AG04449 (cell line): ENCODE measurements at regions of chr2 and their contacts with region 1.

Region 1: GRCh38 chr2:42828487-42829425 is 36.4 kb upstream of the HAAO start:
- DNase-seq: no peak
- H3K4me3 ChIP-seq: no peak overlapping the region
- CTCF ChIP-seq: peak; percentile 88

Region 2: GRCh38 chr2:42848265-42848664 is 19.5 kb after region 1 on chr2:
- CTCF ChIA-PET with region 1: interaction called, 12 read pairs
- POLR2A ChIA-PET with region 1: no interaction called
- DNase-seq: no peak
- H3K4me3 ChIP-seq: no peak overlapping the region
- CTCF ChIP-seq: no peak

Region 3: GRCh38 chr2:42928692-42929545 is 100.2 kb after region 1 on chr2:
- CTCF ChIA-PET with region 1: interaction called, 35 read pairs
- POLR2A ChIA-PET with region 1: no interaction called
- DNase-seq: no peak
- H3K4me3 ChIP-seq: no peak overlapping the region
- CTCF ChIP-seq: peak; percentile 64

Region 4: DNA sequence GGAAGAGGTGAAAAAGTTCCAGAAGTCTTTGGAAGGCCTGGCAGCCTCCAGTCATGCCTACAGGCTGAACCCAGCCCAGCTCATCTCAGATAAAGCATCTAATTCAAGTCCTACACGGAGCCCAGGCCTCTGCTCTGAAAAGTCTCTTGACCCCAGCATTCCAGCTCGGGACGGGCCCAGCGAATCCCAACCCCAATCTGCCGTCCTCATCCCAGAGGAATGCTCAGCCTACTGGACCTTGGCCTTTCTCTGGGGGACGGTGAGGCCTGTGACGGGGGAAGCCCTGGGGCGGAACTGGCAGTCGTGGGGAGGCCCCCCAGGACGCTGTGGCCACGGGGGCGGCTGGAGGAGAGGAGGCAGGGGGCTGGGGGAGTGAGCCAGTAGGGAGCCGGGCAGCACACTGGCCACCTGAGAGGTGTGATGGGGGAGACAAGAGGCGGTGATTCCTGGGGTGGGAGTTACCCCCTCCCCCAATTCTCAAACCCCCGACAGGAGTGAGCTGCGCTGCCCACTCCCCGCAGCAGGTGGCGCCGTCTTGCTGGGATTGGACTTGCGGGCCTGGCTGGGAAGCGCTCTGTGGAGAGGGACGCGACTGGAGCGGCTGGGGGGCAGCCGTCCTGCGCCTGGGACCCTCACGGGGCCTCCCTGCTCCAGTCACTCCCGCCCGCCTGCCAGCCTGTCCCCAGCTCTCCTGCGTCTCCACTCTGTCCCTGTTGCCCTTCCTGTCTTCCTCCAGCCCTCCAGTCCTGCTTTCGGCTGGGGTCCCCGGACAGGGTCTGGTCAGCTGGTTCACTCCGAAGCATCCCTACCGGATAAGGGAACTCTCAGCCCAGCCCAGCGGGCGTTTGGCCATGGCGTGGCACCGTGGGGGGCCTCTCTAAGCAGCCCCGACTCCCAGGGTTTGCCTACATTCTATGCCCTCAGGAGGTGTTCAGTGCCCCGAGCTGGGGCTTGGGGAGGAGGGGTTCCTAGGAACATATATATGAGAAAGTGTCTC is 146.3 kb after region 1 on chr2:
- CTCF ChIA-PET with region 1: interaction called, 15 read pairs
- POLR2A ChIA-PET with region 1: no interaction called
- DNase-seq: no peak
- H3K4me3 ChIP-seq: peak overlapping the region; percentile 48
- CTCF ChIP-seq: peak; percentile 99

Region 5: DNA sequence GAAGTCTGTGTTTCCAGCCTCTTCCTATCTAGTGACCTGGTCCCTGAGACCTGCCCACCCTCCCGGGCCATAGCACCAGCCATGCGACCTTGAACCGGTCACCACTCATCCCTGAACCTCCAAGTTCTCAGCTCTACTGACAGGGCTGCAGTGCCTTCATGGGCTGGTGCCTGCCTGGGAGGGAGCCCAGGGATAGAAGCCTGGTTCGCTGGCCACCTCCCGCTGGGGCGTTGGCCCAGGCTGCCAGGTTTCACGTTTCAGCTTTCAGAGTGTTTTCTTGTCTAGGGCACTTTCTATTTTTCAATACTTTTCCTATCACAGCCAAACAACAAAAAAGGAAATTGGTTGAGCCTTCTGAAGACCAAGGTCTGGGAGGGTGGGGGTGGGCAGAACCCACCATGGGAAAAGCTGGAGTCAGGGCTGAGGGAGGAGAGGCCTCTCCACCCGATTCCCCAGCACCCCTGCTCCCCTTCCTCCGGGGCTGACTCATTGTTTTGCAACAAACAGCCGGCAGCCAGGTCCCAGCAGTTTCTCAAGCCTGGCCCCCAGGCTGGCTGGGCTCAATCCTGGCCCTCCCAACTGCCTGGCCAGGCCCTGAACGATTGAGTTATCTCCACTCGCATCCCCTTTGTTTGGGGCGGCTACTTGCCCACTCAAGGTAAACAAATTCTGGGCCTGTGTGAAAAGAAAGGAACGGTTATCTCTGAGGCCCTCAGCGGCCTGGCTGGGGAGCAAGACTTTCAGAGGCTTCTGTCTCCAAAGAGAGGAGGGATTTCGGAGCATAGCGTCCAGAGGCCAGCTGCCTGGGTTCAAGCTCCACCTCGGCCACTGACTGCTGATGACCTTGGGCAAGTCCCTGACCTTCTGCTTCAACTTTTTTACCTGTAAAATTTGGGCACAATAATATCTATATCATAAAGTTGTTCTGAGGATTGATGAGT is 350.1 kb after region 1 on chr2:
- CTCF ChIA-PET with region 1: no interaction called
- POLR2A ChIA-PET with region 1: no interaction called
- DNase-seq: no peak
- H3K4me3 ChIP-seq: no peak overlapping the region
- CTCF ChIP-seq: no peak

Region 6: GRCh38 chr2:43239981-43240761 is 411.4 kb after region 1 on chr2:
- CTCF ChIA-PET with region 1: interaction called, 10 read pairs
- POLR2A ChIA-PET with region 1: no interaction called
- DNase-seq: no peak
- H3K4me3 ChIP-seq: no peak overlapping the region
- CTCF ChIP-seq: no peak

Region 7: DNA sequence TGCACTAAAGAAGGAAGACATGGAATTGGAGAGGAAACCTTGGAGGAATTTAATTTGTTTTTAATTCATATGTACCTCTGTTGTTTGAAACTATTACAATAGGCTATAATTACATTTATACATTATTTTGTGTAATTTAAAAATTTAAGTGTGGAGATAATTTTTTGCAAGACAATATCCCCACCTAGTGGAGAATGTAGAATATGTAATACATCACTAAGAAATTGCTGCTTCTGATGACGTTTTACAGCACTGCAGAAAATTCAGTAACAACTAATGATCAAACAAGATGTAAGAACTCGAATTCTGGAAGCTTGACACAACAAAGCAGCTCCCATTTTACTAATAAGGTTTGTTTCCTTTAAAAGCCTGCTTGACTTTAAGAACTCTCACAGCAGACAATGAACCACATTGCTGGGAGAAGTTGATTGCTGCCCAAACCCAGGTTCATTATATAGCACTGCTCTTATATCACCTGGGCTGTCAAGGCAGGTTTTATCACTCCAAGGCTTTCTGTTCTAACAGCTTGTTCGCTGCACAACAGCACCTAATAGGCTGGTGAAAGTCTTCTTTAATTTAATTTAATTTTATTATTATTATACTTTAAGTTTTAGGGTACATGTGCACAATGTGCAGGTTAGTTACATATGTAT is 713.7 kb after region 1 on chr2:
- CTCF ChIA-PET with region 1: interaction called, 91 read pairs
- POLR2A ChIA-PET with region 1: no interaction called
- DNase-seq: no peak
- H3K4me3 ChIP-seq: no peak overlapping the region
- CTCF ChIP-seq: peak; percentile 12

Region 8: GRCh38 chr2:43611987-43612894 is 783.5 kb after region 1 on chr2:
- CTCF ChIA-PET with region 1: interaction called, 22 read pairs
- POLR2A ChIA-PET with region 1: no interaction called
- DNase-seq: no peak
- H3K4me3 ChIP-seq: no peak overlapping the region
- CTCF ChIP-seq: peak; percentile 79

Region 9: GRCh38 chr2:43977677-43978375 is 1149.1 kb after region 1 on chr2:
- CTCF ChIA-PET with region 1: no interaction called
- POLR2A ChIA-PET with region 1: no interaction called
- DNase-seq: no peak
- H3K4me3 ChIP-seq: no peak overlapping the region
- CTCF ChIP-seq: no peak